ENCODE measurements at regions of chr9 and their contacts with region 1.

Region 1: GRCh38 chr9:125241000-125241862 is at the start of gene HSPA5:
- DNase-seq: peak; percentile 100
- ATAC-seq: peak; percentile 97 to 98
- H3K4me3 ChIP-seq: peak within 1 kb of the TSS; percentile 88 to 98 (median 92)
- H3K27ac ChIP-seq: peak within 1 kb of the TSS; percentile 91 to 99 (median 96)
- H3K4me1 ChIP-seq: peaks cover 41 to 47% of the 10 kb centered on the region in 2 donors
- H3K27me3 ChIP-seq: no peaks in the 10 kb centered on the region
- CTCF ChIP-seq: peak in 1 of 5 experiments; percentile 38
- POLR2A ChIP-seq: peak; percentile 96 to 99
- total RNA-seq, gene HSPA5: 39.9 to 69.3 (median 46.0) TPM

Region 2: DNA sequence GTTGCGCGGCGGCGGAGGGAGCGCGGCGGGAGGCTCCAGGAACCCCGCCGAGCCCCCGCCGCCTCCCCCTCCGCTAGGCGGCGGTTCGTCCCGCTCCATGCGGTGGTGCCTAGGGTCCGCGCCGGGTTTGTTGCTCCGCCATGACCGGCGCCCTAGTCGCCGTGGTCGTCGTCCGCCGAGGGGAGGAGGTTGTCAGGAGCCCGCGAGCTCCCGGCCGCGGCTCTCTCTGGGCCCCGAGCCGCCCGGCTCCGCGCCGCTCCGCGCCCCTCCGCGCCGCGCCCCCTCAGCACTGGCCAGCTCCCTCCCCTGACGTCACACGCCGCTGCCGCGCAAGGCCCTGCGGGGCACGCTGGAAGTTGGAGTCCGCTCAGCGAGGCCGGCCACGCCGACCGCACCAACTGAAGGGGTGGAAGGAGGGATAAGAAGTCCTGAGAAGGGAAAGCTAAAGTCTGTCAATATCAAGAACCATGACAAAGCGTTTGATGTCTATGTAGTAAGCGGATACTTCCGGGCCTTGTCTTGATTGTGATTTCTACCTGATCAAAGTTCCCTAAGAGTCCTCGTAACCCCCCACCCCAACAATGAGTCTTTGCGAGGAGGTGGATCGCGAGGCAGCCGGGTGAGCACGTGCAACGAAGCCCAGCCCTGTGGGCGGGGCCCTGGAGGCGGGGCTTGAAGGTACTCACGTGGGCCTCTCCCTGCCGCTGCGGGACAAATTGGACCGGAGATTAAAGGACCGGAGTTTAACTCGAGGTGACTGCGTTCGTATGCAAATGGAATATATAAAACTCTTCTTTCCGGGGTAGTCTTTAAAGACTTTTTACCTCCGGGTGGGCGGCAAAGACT is 470.0 kb before region 1 on chr9 and contains the start of gene NR6A1:
- in situ Hi-C with region 1: no loop called
- intact Hi-C with region 1: loop called (anchors 10 kb)
- DNase-seq: peak; percentile 94 to 96
- ATAC-seq: peak; percentile 87 to 93
- H3K4me3 ChIP-seq: peak within 1 kb of the TSS; percentile 61 to 77 (median 72)
- H3K27ac ChIP-seq: peak within 1 kb of the TSS; percentile 77 to 87 (median 80)
- H3K4me1 ChIP-seq: peaks cover 17 to 20% of the 10 kb centered on the region in 2 donors
- H3K27me3 ChIP-seq: peaks cover 8 to 32% (median 14%) of the 10 kb centered on the region in 3 donors
- CTCF ChIP-seq: peak in 4 of 5 experiments; percentile 37 to 61 (median 47)
- POLR2A ChIP-seq: peak; percentile 69 to 84
- total RNA-seq, gene NR6A1: 0.58 to 5.6 (median 2.1) TPM

Region 3: GRCh38 chr9:124861342-124862229 is 379.6 kb before region 1 on chr9 and contains the starts of genes ARPC5L and RPL35:
- in situ Hi-C with region 1: no loop called
- intact Hi-C with region 1: loop called (anchors 5 kb)
- DNase-seq: peak; percentile 91 to 92
- ATAC-seq: peak; percentile 86 to 89
- H3K4me3 ChIP-seq: peak within 1 kb of the TSS; percentile 85 to 100 (median 100)
- H3K27ac ChIP-seq: peak within 1 kb of the TSS; percentile 87 to 97 (median 92)
- H3K4me1 ChIP-seq: peaks cover 35 to 38% of the 10 kb centered on the region in 2 donors
- H3K27me3 ChIP-seq: no peaks in the 10 kb centered on the region
- CTCF ChIP-seq: peak in 2 of 5 experiments; percentile 27 to 38
- POLR2A ChIP-seq: peak; percentile 95 to 97
- total RNA-seq, gene ARPC5L: 28.9 to 47.1 (median 29.2) TPM
- total RNA-seq, gene RPL35: 2,099 to 2,608 (median 2,478) TPM

Region 4: GRCh38 chr9:125189361-125190289 is 51.6 kb before region 1 on chr9 and contains the start of gene PPP6C:
- in situ Hi-C with region 1: no loop called
- intact Hi-C with region 1: loop called (anchors 5 kb)
- DNase-seq: peak; percentile 96 to 98
- ATAC-seq: peak; percentile 91 to 94
- H3K4me3 ChIP-seq: peak within 1 kb of the TSS; percentile 70 to 100 (median 97)
- H3K27ac ChIP-seq: peak within 1 kb of the TSS; percentile 89 to 100 (median 98)
- H3K4me1 ChIP-seq: peaks cover 39 to 44% of the 10 kb centered on the region in 2 donors
- H3K27me3 ChIP-seq: no peaks in the 10 kb centered on the region
- CTCF ChIP-seq: peak in 4 of 5 experiments; percentile 68 to 75 (median 70)
- POLR2A ChIP-seq: peak; percentile 93 to 96
- total RNA-seq, gene PPP6C: 49.4 to 80.6 (median 73.6) TPM

Region 5: GRCh38 chr9:125200210-125201047 is 40.8 kb before region 1 on chr9 and contains the start of gene RABEPK:
- in situ Hi-C with region 1: no loop called
- intact Hi-C with region 1: loop called (anchors 1 kb)
- DNase-seq: peak; percentile 81 to 89
- ATAC-seq: peak; percentile 94 to 97
- H3K4me3 ChIP-seq: peak within 1 kb of the TSS; percentile 83 to 97 (median 94)
- H3K27ac ChIP-seq: peak within 1 kb of the TSS; percentile 87 to 99 (median 97)
- H3K4me1 ChIP-seq: peaks cover 3 to 8% of the 10 kb centered on the region in 2 donors
- H3K27me3 ChIP-seq: no peaks in the 10 kb centered on the region
- CTCF ChIP-seq: no peak
- POLR2A ChIP-seq: peak; percentile 86 to 87
- total RNA-seq, gene RABEPK: 8.7 to 15.0 (median 13.4) TPM

Region 6: GRCh38 chr9:125261501-125262293 is 20.5 kb after region 1 on chr9 and contains the start of gene GAPVD1:
- in situ Hi-C with region 1: no loop called
- intact Hi-C with region 1: loop called (anchors 1 kb)
- DNase-seq: peak; percentile 68 to 89
- ATAC-seq: peak; percentile 96 to 97
- H3K4me3 ChIP-seq: peak within 1 kb of the TSS; percentile 91 to 99 (median 98)
- H3K27ac ChIP-seq: peak within 1 kb of the TSS; percentile 84 to 97 (median 94)
- H3K4me1 ChIP-seq: peaks cover 27% of the 10 kb centered on the region in 2 donors
- H3K27me3 ChIP-seq: no peaks in the 10 kb centered on the region
- CTCF ChIP-seq: peak; percentile 40 to 60 (median 48)
- POLR2A ChIP-seq: peak; percentile 78 to 89
- total RNA-seq, gene GAPVD1: 46.9 to 66.8 (median 53.6) TPM

Region 7: DNA sequence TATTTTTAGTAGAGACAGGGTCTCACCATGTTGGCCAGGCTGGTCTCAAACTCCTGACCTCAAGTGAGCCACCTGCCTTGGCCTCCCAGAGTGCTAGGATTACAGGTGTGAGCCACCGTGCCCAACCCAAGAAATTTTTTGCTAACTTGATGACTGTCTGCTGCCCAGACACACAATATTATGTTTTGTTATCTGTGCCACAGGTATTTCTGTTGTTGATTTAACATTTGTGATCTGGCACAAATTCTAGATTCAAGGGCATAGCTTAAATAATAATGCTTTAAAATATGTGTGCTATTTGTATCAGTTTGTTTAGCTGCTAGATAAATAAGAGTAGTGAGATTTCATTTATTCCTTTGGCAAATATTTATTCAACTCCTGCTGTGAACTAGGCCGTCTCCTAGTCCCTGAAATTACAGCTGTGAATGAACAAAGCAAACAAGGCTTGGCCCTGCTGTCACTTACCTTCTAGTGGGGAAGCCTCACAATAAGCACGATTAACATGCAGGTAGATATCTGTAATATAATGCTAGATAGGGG is 55.7 kb after region 1 on chr9:
- in situ Hi-C with region 1: no loop called
- intact Hi-C with region 1: no loop called
- DNase-seq: no peak
- ATAC-seq: no peak
- H3K4me3 ChIP-seq: no peak overlapping the region
- H3K27ac ChIP-seq: peak overlapping the region in 1 of 4 donors; percentile 22
- H3K4me1 ChIP-seq: peaks cover 0 to 11% of the 10 kb centered on the region in 2 donors
- H3K27me3 ChIP-seq: no peaks in the 10 kb centered on the region
- CTCF ChIP-seq: no peak
- POLR2A ChIP-seq: no peak

Measured in gastrocnemius medialis (tissue), 4 donors.